CD4-positive, alpha-beta memory T cell (primary cell): ENCODE measurements at regions of chrX and their contacts with region 1.

Region 1: GRCh38 chrX:65034668-65035445 is 58.6 kb upstream of the ZC4H2 start:
- DNase-seq: peak; percentile 76 to 79 (median 79)
- H3K4me3 ChIP-seq: peak within 1 kb of the TSS; percentile 42 to 54
- H3K4me3 Mint-ChIP-seq: peak within 1 kb of the TSS; percentile 91 to 97 (median 93)
- H3K27ac ChIP-seq: peak within 1 kb of the TSS; percentile 58
- H3K27ac Mint-ChIP-seq: peak within 1 kb of the TSS; percentile 93 to 98 (median 95)
- H3K4me1 ChIP-seq: peaks cover 15% of the 10 kb centered on the region
- H3K4me1 Mint-ChIP-seq: peaks cover 10 to 26% (median 11%) of the 10 kb centered on the region in 4 donors
- H3K27me3 ChIP-seq: no peaks in the 10 kb centered on the region
- H3K27me3 Mint-ChIP-seq: no peaks in the 10 kb centered on the region

Region 2: DNA sequence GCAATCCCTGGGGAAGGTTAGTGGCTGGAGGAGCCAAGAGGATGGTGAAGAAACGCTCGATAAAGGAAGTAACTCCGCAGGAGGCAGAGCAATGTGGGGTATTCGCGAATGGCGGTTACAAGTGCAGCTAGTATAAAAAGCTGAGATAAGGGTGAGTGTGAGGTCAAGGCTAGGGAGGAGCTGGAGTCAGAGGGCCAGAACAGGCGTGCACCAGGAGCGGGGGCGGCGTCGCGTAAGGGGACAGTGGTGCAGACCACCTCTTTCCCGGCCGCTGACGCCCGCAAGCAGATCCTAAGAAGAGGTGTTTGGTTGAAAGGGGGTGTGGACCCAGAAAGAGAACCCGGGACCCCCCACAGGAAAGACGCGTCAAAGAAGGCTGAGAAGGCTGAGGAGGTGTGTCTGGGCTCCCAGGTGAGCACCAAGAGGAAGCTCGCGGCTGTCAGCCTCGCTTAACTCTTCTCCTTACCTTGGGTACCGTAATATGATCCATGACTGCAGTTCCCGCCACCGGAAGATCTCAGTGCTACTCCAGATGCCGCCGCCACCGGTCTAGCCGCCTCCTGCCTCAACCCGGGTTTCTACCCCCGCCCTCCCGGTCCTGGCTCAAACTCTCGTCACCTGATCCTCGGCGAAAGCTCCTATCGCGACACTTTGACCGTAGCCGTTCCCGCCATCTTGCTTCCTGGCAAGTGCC is 639.8 kb before region 1 on chrX and contains the start of gene MTMR8:
- CTCF ChIA-PET with region 1: no interaction called
- POLR2A ChIA-PET with region 1: no interaction called
- intact Hi-C with region 1: loop called (anchors 5 kb)
- DNase-seq: peak; percentile 77 to 83 (median 80)
- H3K4me3 ChIP-seq: peak within 1 kb of the TSS; percentile 52 to 79
- H3K4me3 Mint-ChIP-seq: peak within 1 kb of the TSS; percentile 90 to 97 (median 94)
- H3K27ac ChIP-seq: peak within 1 kb of the TSS; percentile 54
- H3K27ac Mint-ChIP-seq: peak within 1 kb of the TSS; percentile 86 to 93 (median 91)
- H3K4me1 ChIP-seq: peaks cover 15% of the 10 kb centered on the region
- H3K4me1 Mint-ChIP-seq: peaks cover 12 to 56% (median 32%) of the 10 kb centered on the region in 4 donors
- H3K27me3 ChIP-seq: no peaks in the 10 kb centered on the region
- H3K27me3 Mint-ChIP-seq: no peaks in the 10 kb centered on the region
- total RNA-seq, gene MTMR8: 7.6 to 8.3 TPM

Region 3: GRCh38 chrX:64894454-64895038 is 140.3 kb before region 1 on chrX:
- CTCF ChIA-PET with region 1: no interaction called
- POLR2A ChIA-PET with region 1: no interaction called
- intact Hi-C with region 1: loop called (anchors 10 kb)
- DNase-seq: peak; percentile 21 to 33 (median 26)
- H3K4me3 ChIP-seq: no peak overlapping the region
- H3K4me3 Mint-ChIP-seq: peak overlapping the region in 1 of 8 donors; percentile 9
- H3K27ac ChIP-seq: no peak overlapping the region
- H3K27ac Mint-ChIP-seq: peak overlapping the region in 3 of 7 donors; percentile 65 to 85 (median 72)
- H3K4me1 ChIP-seq: no peaks in the 10 kb centered on the region
- H3K4me1 Mint-ChIP-seq: peaks cover 0 to 25% (median 10%) of the 10 kb centered on the region in 4 donors
- H3K27me3 ChIP-seq: no peaks in the 10 kb centered on the region
- H3K27me3 Mint-ChIP-seq: no peaks in the 10 kb centered on the region

Region 4: DNA sequence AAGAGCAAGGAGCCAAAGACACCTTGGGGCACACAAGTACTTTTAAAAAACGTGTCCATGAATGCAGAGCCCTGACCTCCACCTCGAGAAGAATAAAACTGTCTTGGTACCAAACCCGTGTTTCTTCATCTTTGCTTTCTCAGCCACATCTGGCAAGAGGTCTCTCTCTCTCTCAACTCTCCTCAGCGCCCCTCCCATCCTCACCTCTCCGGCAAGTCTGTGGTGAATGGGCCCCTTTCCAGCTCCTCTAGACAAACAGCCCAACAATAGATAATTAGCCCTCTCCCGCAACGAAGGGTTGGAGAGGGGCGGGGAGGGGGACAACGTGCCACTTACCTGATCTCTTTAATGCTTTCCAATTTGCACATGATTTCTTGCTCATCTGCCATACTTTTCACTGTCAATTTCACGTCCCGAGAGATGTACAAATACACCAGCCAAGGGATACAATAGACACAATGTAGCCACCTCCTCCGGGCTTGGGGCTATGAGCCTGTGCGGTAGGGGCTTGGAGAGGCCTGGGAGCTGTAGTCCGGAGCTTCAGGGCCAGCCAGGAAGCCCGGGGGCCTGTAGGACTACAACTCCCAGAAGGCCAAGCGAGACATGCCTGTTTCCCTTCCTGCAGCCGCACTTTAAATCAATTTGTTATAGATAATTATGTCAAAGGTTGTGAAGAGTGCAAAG is 58.7 kb before region 1 on chrX and contains the start of gene ZC4H2:
- CTCF ChIA-PET with region 1: interaction called, 5 read pairs
- POLR2A ChIA-PET with region 1: interaction called, 13 read pairs
- intact Hi-C with region 1: loop called (anchors 1 kb)
- DNase-seq: peak; percentile 65 to 77 (median 68)
- H3K4me3 ChIP-seq: peak within 1 kb of the TSS; percentile 61 to 73
- H3K4me3 Mint-ChIP-seq: peak within 1 kb of the TSS; percentile 89 to 98 (median 96)
- H3K27ac ChIP-seq: peak within 1 kb of the TSS; percentile 24
- H3K27ac Mint-ChIP-seq: peak within 1 kb of the TSS; percentile 65 to 91 (median 87)
- H3K4me1 ChIP-seq: peaks cover 15% of the 10 kb centered on the region
- H3K4me1 Mint-ChIP-seq: peaks cover 4 to 33% (median 16%) of the 10 kb centered on the region in 4 donors
- H3K27me3 ChIP-seq: no peaks in the 10 kb centered on the region
- H3K27me3 Mint-ChIP-seq: no peaks in the 10 kb centered on the region
- total RNA-seq, gene ZC4H2: 8.2 to 11.8 TPM

Region 5: GRCh38 chrX:65045001-65045400 is 10.1 kb after region 1 on chrX:
- CTCF ChIA-PET with region 1: no interaction called
- POLR2A ChIA-PET with region 1: no interaction called
- intact Hi-C with region 1: no loop called
- DNase-seq: no peak
- H3K4me3 ChIP-seq: no peak overlapping the region
- H3K4me3 Mint-ChIP-seq: no peak overlapping the region
- H3K27ac ChIP-seq: no peak overlapping the region
- H3K27ac Mint-ChIP-seq: no peak overlapping the region
- H3K4me1 ChIP-seq: no peaks in the 10 kb centered on the region
- H3K4me1 Mint-ChIP-seq: peaks cover 0 to 7% (median 3%) of the 10 kb centered on the region in 4 donors
- H3K27me3 ChIP-seq: no peaks in the 10 kb centered on the region
- H3K27me3 Mint-ChIP-seq: no peaks in the 10 kb centered on the region

Region 6: GRCh38 chrX:65534450-65535292 is 499.8 kb after region 1 on chrX and contains the start of gene LAS1L:
- CTCF ChIA-PET with region 1: no interaction called
- POLR2A ChIA-PET with region 1: interaction called, 4 read pairs
- intact Hi-C with region 1: loop called (anchors 1 kb)
- DNase-seq: peak; percentile 90 to 94 (median 91)
- H3K4me3 ChIP-seq: peak within 1 kb of the TSS; percentile 66 to 75
- H3K4me3 Mint-ChIP-seq: peak within 1 kb of the TSS; percentile 97 to 100 (median 100)
- H3K27ac ChIP-seq: peak within 1 kb of the TSS; percentile 73
- H3K27ac Mint-ChIP-seq: peak within 1 kb of the TSS; percentile 97 to 100 (median 99)
- H3K4me1 ChIP-seq: peaks cover 18% of the 10 kb centered on the region
- H3K4me1 Mint-ChIP-seq: peaks cover 7 to 24% (median 16%) of the 10 kb centered on the region in 4 donors
- H3K27me3 ChIP-seq: no peaks in the 10 kb centered on the region
- H3K27me3 Mint-ChIP-seq: no peaks in the 10 kb centered on the region
- total RNA-seq, gene LAS1L: 38.5 to 41.6 TPM